AG04450 (cell line): ENCODE measurements at regions of chr4 and their contacts with region 1.

Region 1: GRCh38 chr4:26330186-26330787 is 9.5 kb downstream of the RBPJ start:
- DNase-seq: no peak
- H3K4me3 ChIP-seq: no peak overlapping the region
- H3K27ac ChIP-seq: no peak overlapping the region
- H3K27me3 ChIP-seq: no peaks in the 10 kb centered on the region
- CTCF ChIP-seq: peak; percentile 74

Region 2: DNA sequence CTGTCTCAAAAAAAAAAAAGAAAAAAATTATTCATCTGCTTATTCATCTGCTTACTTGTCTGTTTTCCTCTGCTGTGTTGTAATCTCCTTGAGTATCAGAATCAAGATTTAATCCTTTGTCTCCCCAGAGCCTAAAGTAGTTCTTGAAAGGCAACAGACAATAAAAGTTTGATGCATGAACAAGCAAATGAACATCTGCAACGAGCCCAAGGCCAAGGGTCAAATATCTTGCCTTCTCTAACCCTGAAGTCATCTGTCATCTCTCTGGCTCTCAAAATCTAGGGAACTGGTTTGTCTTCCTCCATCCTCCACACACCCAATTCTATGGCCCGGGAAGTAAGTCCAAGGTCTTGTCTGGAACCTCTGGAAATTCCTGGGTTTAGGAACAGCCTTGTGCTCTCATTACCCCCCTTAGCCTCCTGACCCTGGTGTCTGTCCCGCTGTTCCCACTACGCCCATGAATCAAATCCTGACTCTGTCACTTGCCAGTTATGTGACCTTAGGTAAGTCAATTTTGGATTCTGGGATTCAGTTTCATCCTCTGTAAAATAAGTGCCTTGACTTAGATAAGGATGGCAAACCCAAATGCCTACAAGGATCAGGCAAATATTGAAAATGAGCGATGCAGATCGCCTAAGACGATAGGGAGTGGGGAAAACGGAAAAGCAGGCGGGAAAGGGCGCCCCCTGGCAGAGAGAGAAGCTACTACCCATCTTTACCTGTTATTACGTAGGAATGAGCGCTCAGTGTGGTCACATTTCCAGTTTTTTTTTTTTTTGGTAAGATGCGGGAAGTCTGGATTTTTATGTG is 1643.2 kb before region 1 on chr4:
- CTCF ChIA-PET with region 1: no interaction called
- POLR2A ChIA-PET with region 1: no interaction called
- DNase-seq: no peak
- H3K4me3 ChIP-seq: no peak overlapping the region
- H3K27ac ChIP-seq: no peak overlapping the region
- H3K27me3 ChIP-seq: peaks cover 1% of the 10 kb centered on the region
- CTCF ChIP-seq: peak; percentile 53

Region 3: GRCh38 chr4:26028793-26029567 is 301.3 kb before region 1 on chr4:
- CTCF ChIA-PET with region 1: interaction called, 20 read pairs
- POLR2A ChIA-PET with region 1: interaction called, 3 read pairs
- DNase-seq: peak; percentile 23
- H3K4me3 ChIP-seq: 0 out of 2 replicates have a peak overlapping the region, but pooled peaks have one; percentile 10
- H3K27ac ChIP-seq: no peak overlapping the region
- H3K27me3 ChIP-seq: no peaks in the 10 kb centered on the region
- CTCF ChIP-seq: peak; percentile 88

Region 4: GRCh38 chr4:26311633-26312032 is 18.7 kb before region 1 on chr4:
- CTCF ChIA-PET with region 1: no interaction called
- POLR2A ChIA-PET with region 1: no interaction called
- DNase-seq: no peak
- H3K4me3 ChIP-seq: no peak overlapping the region
- H3K27ac ChIP-seq: no peak overlapping the region
- H3K27me3 ChIP-seq: no peaks in the 10 kb centered on the region
- CTCF ChIP-seq: no peak

Region 5: DNA sequence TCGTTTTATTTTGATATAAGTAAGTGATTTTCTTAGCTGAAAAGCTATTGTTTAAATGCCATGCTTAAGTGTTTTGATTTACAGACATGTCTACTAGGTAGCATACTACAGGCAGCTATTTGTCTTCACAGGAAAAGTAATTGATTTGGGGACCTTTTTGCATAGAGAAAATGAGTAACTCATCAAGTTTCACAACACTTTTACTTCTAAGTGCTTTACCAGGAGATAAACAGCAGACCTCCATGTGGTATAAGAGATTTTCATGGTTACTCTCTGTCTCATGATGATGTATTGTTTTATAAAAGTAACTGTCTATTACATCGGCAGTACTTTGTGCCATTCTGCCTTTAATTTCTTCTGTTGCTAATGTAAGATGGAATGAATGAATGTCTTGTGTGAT is 19.2 kb after region 1 on chr4:
- CTCF ChIA-PET with region 1: interaction called, 43 read pairs
- POLR2A ChIA-PET with region 1: no interaction called
- DNase-seq: no peak
- H3K4me3 ChIP-seq: no peak overlapping the region
- H3K27ac ChIP-seq: no peak overlapping the region
- H3K27me3 ChIP-seq: no peaks in the 10 kb centered on the region
- CTCF ChIP-seq: no peak

Region 6: GRCh38 chr4:26410385-26411293 is 80.4 kb after region 1 on chr4:
- CTCF ChIA-PET with region 1: interaction called, 141 read pairs
- POLR2A ChIA-PET with region 1: no interaction called
- DNase-seq: no peak
- H3K4me3 ChIP-seq: no peak overlapping the region
- H3K27ac ChIP-seq: no peak overlapping the region
- H3K27me3 ChIP-seq: no peaks in the 10 kb centered on the region
- CTCF ChIP-seq: peak; percentile 61

Region 7: DNA sequence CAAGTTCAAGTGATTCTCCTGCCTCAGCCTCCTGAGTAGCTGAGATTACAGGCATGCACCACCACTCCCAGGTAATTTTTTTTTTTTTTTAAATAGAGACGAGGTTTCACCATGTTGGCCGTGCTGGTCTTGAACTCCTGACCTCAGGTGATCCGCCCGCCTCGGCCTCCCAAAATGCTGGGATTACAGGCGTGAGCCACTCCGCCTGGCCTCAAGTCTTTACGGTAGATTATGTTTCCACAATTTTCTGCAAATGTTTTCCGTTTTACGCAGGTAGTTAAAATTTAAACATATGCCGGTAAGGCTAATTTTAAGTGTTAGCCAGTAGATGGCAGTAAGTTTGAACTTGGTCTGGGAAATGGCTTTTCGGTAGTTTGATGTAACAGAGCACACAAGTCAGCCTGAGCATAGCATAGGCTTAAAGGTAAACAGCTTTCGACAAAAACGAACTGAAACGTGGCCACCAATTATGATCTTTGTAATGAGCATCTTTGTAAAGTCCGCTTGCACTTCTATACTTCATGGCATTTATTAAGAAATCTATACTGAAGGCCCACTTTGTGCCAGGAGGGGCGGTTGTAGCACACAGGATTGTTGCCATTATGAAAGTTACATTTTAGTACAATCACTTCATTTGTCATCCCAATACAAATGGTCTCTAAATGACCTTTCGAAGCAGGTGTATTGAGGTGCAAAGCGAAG is 128.9 kb after region 1 on chr4:
- CTCF ChIA-PET with region 1: interaction called, 10 read pairs
- POLR2A ChIA-PET with region 1: no interaction called
- DNase-seq: peak; percentile 66
- H3K4me3 ChIP-seq: peak overlapping the region; percentile 15; the same call in 1 of the 2 replicates
- H3K27ac ChIP-seq: peak overlapping the region; percentile 76
- H3K27me3 ChIP-seq: no peaks in the 10 kb centered on the region
- CTCF ChIP-seq: peak; percentile 65

Region 8: GRCh38 chr4:27010334-27010940 is 680.1 kb after region 1 on chr4:
- CTCF ChIA-PET with region 1: interaction called, 11 read pairs
- POLR2A ChIA-PET with region 1: interaction called, 3 read pairs
- DNase-seq: no peak
- H3K4me3 ChIP-seq: no peak overlapping the region
- H3K27ac ChIP-seq: no peak overlapping the region
- H3K27me3 ChIP-seq: no peaks in the 10 kb centered on the region
- CTCF ChIP-seq: peak; percentile 87